ENCODE measurements at regions of chr20 and their contacts with region 1.

Region 1: DNA sequence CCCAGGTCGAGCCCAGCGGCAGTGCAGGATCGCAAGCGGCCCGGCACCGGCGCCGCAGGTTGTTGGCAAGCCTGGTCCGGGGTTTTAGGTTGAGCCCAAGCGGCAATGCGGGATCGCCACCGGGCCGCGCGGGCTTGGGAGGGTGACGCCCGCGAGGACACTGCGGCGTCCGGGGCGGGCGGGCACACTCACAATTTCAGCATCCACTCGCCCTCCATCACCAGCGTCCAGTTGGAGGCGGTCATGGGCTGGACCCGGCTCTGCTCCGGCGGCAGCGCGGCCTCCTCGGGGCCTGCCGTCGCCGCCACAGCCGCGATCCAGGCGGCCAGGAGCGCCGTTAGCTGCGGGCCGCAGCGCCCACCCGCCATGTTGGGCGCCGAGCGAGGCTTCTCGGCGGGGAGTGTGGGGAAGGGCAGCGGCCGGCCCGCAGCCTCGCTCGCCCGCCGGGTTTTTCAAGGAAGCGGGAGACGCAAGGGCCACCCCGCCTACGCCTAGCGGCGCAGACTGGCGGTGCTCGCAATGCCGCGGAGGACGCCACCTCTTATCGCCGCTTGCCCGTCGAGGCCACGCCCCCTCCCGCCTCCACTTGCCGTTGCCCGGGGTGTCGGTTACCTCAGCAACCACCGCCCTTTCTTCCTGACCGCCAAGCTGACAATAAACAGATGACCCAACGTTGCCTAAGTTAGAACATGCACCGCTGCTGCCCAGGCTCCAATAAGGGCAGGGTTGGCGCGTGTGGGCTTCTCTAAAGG is at the start of gene TMX4:
- DNase-seq: peak; percentile 93
- ATAC-seq: peak; percentile 82
- H3K4me3 ChIP-seq: peak within 1 kb of the TSS; percentile 79
- H3K27ac ChIP-seq: peak within 1 kb of the TSS; percentile 55
- H3K4me1 ChIP-seq: peaks cover 20% of the 10 kb centered on the region
- H3K27me3 ChIP-seq: peaks cover 6% of the 10 kb centered on the region; the same call in 1 of the 2 replicates
- CTCF ChIP-seq: peak; percentile 40; the same call in 1 of the 2 replicates
- total RNA-seq, gene TMX4: 12.3 and 12.4 TPM in 2 replicates

Region 2: GRCh38 chr20:7637184-7637583 is 382.2 kb before region 1 on chr20:
- CTCF ChIA-PET with region 1: no interaction called
- POLR2A ChIA-PET with region 1: no interaction called
- intact Hi-C with region 1: no loop called
- DNase-seq: peak; percentile 87
- ATAC-seq: peak; percentile 87
- H3K4me3 ChIP-seq: no peak overlapping the region
- H3K27ac ChIP-seq: peak overlapping the region; percentile 70
- H3K4me1 ChIP-seq: peaks cover 20% of the 10 kb centered on the region
- H3K27me3 ChIP-seq: no peaks in the 10 kb centered on the region
- CTCF ChIP-seq: no peak

Region 3: DNA sequence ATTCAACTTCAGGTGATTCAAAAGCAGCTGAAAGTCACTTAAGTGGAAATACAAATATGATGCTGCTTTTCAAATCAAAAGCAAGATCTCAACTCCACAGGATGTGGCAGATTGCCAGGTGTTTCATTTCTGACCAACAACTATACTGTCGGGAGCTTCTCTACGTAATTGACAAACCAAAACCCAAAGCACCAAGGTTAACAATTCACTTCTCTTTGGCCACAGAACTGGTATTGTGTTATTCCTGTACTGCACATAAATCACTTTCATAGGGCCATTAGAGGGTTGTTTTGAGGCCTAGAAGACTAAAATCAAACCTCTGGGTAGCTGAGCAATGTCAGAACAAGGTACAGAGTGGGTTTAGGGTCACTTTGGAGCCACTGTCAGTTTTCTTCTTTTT is 248.8 kb before region 1 on chr20:
- CTCF ChIA-PET with region 1: no interaction called
- POLR2A ChIA-PET with region 1: no interaction called
- intact Hi-C with region 1: no loop called
- DNase-seq: peak; percentile 73
- ATAC-seq: no peak
- H3K4me3 ChIP-seq: no peak overlapping the region
- H3K27ac ChIP-seq: peak overlapping the region; percentile 58
- H3K4me1 ChIP-seq: peaks cover 26% of the 10 kb centered on the region
- H3K27me3 ChIP-seq: no peaks in the 10 kb centered on the region
- CTCF ChIP-seq: no peak

Region 4: DNA sequence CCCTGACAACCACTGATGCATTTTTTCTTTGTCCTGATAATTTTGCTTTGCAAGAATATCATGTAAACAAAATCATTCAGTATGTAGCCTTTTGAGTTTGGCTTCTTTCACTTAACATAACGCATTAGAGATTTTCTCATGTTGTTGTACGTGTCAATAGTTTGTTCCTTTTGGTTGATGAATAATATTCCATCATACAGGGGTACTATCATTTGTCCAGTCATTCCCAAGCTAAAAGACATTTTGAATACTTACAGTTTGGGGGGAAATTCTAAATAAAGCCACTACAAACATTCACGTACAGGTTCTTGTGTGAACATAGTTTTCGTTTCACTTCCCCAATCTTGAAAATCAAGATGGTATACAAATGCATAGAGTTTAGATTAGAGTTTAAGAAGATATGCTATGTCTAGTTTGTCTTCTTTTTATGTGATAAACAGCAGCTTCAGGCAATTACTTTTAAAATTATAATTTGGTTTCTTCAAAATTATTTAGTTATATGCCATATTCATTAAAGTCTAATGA is 84.3 kb before region 1 on chr20:
- CTCF ChIA-PET with region 1: no interaction called
- POLR2A ChIA-PET with region 1: interaction called, 13 read pairs
- intact Hi-C with region 1: no loop called
- DNase-seq: no peak
- ATAC-seq: no peak
- H3K4me3 ChIP-seq: no peak overlapping the region
- H3K27ac ChIP-seq: no peak overlapping the region
- H3K4me1 ChIP-seq: peaks cover 7% of the 10 kb centered on the region
- H3K27me3 ChIP-seq: peaks cover 3% of the 10 kb centered on the region; the same call in 1 of the 2 replicates
- CTCF ChIP-seq: no peak

Region 5: GRCh38 chr20:7980332-7981046 is 38.9 kb before region 1 on chr20:
- CTCF ChIA-PET with region 1: no interaction called
- POLR2A ChIA-PET with region 1: no interaction called
- intact Hi-C with region 1: loop called (anchors 2 kb)
- DNase-seq: peak; percentile 62
- ATAC-seq: peak; percentile 82
- H3K4me3 ChIP-seq: no peak overlapping the region
- H3K27ac ChIP-seq: no peak overlapping the region
- H3K4me1 ChIP-seq: peaks cover 7% of the 10 kb centered on the region
- H3K27me3 ChIP-seq: no peaks in the 10 kb centered on the region
- CTCF ChIP-seq: peak; percentile 83

Region 6: GRCh38 chr20:7989379-7989778 is 30.0 kb before region 1 on chr20:
- CTCF ChIA-PET with region 1: no interaction called
- POLR2A ChIA-PET with region 1: no interaction called
- intact Hi-C with region 1: loop called (anchors 1 kb)
- DNase-seq: peak; percentile 35
- ATAC-seq: no peak
- H3K4me3 ChIP-seq: no peak overlapping the region
- H3K27ac ChIP-seq: no peak overlapping the region
- H3K4me1 ChIP-seq: peaks cover 13% of the 10 kb centered on the region
- H3K27me3 ChIP-seq: no peaks in the 10 kb centered on the region
- CTCF ChIP-seq: peak; percentile 47

Region 7: GRCh38 chr20:8039042-8039441 is 19.6 kb after region 1 on chr20:
- CTCF ChIA-PET with region 1: no interaction called
- POLR2A ChIA-PET with region 1: no interaction called
- intact Hi-C with region 1: no loop called
- DNase-seq: no peak
- ATAC-seq: no peak
- H3K4me3 ChIP-seq: no peak overlapping the region
- H3K27ac ChIP-seq: no peak overlapping the region
- H3K4me1 ChIP-seq: no peaks in the 10 kb centered on the region
- H3K27me3 ChIP-seq: peaks cover 64% of the 10 kb centered on the region
- CTCF ChIP-seq: peak; percentile 31; the same call in 1 of the 2 replicates